K562 (cell line): ENCODE measurements at regions of chr17 and their contacts with region 1.

Region 1: DNA sequence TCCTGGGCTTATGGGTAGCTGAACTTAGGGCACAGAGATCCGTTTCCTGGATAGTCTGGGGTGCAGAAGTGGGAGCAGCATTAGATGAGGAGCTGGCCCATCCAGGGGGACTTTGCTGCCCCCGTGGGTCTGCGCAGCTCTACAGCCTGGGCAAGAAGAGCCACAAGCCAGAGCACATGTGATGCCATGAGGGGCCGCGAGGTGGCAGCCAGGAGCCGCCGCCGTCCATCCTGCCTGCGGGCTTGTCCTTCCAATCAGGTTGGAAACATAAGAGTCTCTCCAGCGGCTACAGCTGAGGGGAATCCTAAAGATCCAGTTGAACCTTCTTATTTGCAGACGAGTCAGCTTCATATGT is 21.9 kb downstream of the C1QTNF1 start:
- DNase-seq: peak; percentile 76 to 77 (median 77)
- ATAC-seq: peak; percentile 95
- H3K4me3 ChIP-seq: no peak overlapping the region
- H3K27ac ChIP-seq: no peak overlapping the region
- H3K4me1 ChIP-seq: peaks cover 0 to 17% of the 10 kb centered on the region in 2 experiments; a peak in 2 of 5 replicates
- H3K27me3 ChIP-seq: peaks cover 38 to 87% of the 10 kb centered on the region in 2 experiments; a peak in 4 of 5 replicates
- CTCF ChIP-seq: peak; percentile 91 to 93 (median 92)
- EP300 ChIP-seq: no peak
- POLR2A ChIP-seq: no peak
- RAD21 ChIP-seq: peak; percentile 70 to 83

Region 2: DNA sequence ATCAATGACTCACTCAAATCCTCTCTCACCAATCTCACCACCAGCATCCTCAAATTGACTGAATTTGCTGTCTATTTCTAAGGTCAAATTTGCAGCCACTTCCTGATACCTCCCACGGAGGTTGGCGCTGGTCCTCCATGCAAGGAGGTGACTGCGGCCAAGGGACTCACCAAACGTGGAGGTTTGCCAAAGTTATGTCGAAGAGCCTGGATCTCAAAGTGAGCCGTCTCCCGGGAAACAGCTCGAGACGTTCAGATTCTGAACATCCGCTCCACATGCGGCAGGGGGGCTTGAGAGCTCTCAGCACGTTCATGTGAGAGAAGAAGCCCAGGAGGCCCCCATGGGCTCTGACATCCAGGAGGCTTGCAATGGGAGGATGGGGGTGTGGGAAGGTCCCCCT is 88.7 kb before region 1 on chr17:
- CTCF ChIA-PET with region 1: no interaction called
- POLR2A ChIA-PET with region 1: no interaction called
- in situ Hi-C with region 1: no loop called
- intact Hi-C with region 1: no loop called
- DNase-seq: no peak
- ATAC-seq: no peak
- H3K4me3 ChIP-seq: no peak overlapping the region
- H3K27ac ChIP-seq: no peak overlapping the region
- H3K4me1 ChIP-seq: peaks cover 7 to 8% of the 10 kb centered on the region in 2 experiments; a peak in 4 of 5 replicates
- H3K27me3 ChIP-seq: peaks cover 49 to 92% of the 10 kb centered on the region in 2 experiments
- CTCF ChIP-seq: no peak
- EP300 ChIP-seq: no peak
- POLR2A ChIP-seq: no peak
- RAD21 ChIP-seq: no peak

Region 3: DNA sequence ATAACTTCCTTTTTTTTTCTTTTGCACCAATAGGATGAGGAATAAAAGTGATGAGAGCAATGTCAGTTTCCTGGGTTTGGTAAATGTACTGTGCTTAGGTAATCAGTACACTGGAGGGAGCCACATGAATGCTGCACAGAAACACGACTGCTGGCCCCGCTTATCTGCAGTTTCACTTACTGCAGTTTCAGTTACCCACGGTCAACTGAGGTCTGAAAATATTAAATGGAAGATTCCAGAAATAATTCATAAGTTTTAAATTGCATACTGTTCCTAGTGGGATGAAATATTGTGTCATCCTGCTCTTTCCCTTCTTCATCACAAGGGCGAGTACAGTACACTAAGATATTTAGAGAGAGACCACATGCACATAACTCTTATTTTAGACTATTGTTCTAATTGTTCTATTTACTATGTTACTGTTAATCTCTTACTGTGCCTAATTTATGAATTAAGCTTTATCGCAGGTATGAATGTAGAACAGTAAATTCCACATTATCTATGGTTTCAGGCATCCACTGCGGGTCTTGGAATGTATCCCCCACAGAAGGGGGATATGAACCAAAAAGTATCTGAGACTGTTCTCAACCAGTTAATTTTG is 59.7 kb before region 1 on chr17:
- CTCF ChIA-PET with region 1: interaction called, 4 read pairs
- POLR2A ChIA-PET with region 1: no interaction called
- in situ Hi-C with region 1: no loop called
- intact Hi-C with region 1: loop called (anchors 2 kb)
- DNase-seq: peak; percentile 60 to 82 (median 68)
- ATAC-seq: peak; percentile 92
- H3K4me3 ChIP-seq: peak overlapping the region; percentile 6; the same call in 1 of the 2 replicates
- H3K27ac ChIP-seq: peak overlapping the region; percentile 67
- H3K4me1 ChIP-seq: peaks cover 11 to 21% of the 10 kb centered on the region in 2 experiments
- H3K27me3 ChIP-seq: no peaks in the 10 kb centered on the region
- CTCF ChIP-seq: peak; percentile 64 to 86 (median 80)
- EP300 ChIP-seq: no peak; the same call in 1 of the 2 replicates
- POLR2A ChIP-seq: no peak
- RAD21 ChIP-seq: peak; percentile 66 to 82

Region 4: GRCh38 chr17:79019632-79020584 is 25.9 kb before region 1 on chr17:
- CTCF ChIA-PET with region 1: interaction called, 8 read pairs
- POLR2A ChIA-PET with region 1: interaction called, 3 read pairs
- in situ Hi-C with region 1: no loop called
- intact Hi-C with region 1: loop called (anchors 2 kb)
- DNase-seq: peak; percentile 48 to 62 (median 53)
- ATAC-seq: peak; percentile 83
- H3K4me3 ChIP-seq: no peak overlapping the region
- H3K27ac ChIP-seq: no peak overlapping the region
- H3K4me1 ChIP-seq: peaks cover 0 to 13% of the 10 kb centered on the region in 2 experiments; a peak in 2 of 5 replicates
- H3K27me3 ChIP-seq: peaks cover 27 to 36% of the 10 kb centered on the region in 2 experiments
- CTCF ChIP-seq: peak; percentile 57 to 84 (median 73); a peak in 5 of 6 replicates
- EP300 ChIP-seq: 0 out of 2 replicates have a peak, but pooled peaks have one; percentile 16
- POLR2A ChIP-seq: no peak
- RAD21 ChIP-seq: peak; percentile 59 to 75

Region 5: GRCh38 chr17:79082311-79083190 is 36.7 kb after region 1 on chr17:
- CTCF ChIA-PET with region 1: interaction called, 7 read pairs
- POLR2A ChIA-PET with region 1: no interaction called
- in situ Hi-C with region 1: no loop called
- intact Hi-C with region 1: loop called (anchors 5 kb)
- DNase-seq: peak; percentile 66 to 84 (median 82)
- ATAC-seq: peak; percentile 91
- H3K4me3 ChIP-seq: no peak overlapping the region
- H3K27ac ChIP-seq: no peak overlapping the region
- H3K4me1 ChIP-seq: peaks cover 0 to 30% of the 10 kb centered on the region in 2 experiments; a peak in 2 of 5 replicates
- H3K27me3 ChIP-seq: no peaks in the 10 kb centered on the region
- CTCF ChIP-seq: peak; percentile 75 to 90 (median 88)
- EP300 ChIP-seq: no peak
- POLR2A ChIP-seq: no peak
- RAD21 ChIP-seq: peak; percentile 33 to 70